ENCODE measurements at regions of chr3 and their contacts with region 1.

Region 1: GRCh38 chr3:184371570-184372018 is 6.4 kb downstream of the THPO start:
- DNase-seq: peak; percentile 81
- ATAC-seq: peak; percentile 95
- H3K4me3 Mint-ChIP-seq: no peak overlapping the region
- H3K27ac Mint-ChIP-seq: no peak overlapping the region
- H3K4me1 Mint-ChIP-seq: peaks cover 16% of the 10 kb centered on the region
- H3K27me3 Mint-ChIP-seq: peaks cover 3% of the 10 kb centered on the region

Region 2: DNA sequence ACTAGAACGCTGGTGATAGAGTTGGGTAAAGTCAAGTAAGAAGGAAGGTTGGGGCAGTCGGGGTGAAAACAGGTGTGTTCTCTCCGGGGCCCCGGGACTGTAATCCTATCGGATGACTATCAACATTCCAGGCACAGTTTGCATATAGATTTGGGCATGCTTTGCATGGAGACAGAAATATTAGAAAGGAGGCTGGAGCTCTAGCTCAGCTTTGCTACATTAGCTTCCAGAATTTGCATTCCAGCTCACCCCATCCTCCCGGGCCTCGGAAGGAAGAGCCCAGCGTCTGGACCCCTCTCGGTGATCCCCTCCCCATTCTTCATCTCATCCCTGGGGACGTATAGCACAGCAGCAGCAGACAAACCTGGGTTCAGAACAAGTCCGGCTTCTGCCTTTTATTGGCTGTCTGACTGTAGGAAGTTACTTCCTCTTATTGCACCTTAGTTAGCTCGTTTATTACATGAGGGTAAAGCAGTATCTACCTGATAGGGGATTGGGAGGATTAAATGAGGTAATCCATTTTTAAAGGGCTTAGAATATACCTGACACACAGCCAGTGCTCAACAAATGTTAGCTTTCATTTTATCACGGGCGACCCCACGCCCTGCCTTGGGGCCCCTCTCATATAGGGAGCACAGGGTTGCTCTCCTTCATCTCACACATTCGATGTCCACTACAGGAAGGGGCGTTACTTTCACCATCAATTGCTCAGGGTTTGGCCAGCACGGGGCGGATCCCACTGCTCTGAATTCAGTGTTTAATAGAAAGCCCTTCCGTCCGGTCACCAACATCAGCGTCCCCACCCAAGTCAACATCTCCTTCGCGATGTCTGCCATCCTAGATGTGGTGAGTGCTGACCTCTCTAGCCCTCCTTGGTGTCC is 271.5 kb before region 1 on chr3:
- CTCF ChIA-PET with region 1: no interaction called
- POLR2A ChIA-PET with region 1: no interaction called
- intact Hi-C with region 1: no loop called
- DNase-seq: no peak
- ATAC-seq: no peak
- H3K4me3 Mint-ChIP-seq: no peak overlapping the region
- H3K27ac Mint-ChIP-seq: no peak overlapping the region
- H3K4me1 Mint-ChIP-seq: no peaks in the 10 kb centered on the region
- H3K27me3 Mint-ChIP-seq: peaks cover 2% of the 10 kb centered on the region

Region 3: GRCh38 chr3:184417619-184418327 is 46.2 kb after region 1 on chr3:
- CTCF ChIA-PET with region 1: interaction called, 11 read pairs
- POLR2A ChIA-PET with region 1: no interaction called
- intact Hi-C with region 1: loop called in 1 of 2 experiments (anchors 1 kb)
- DNase-seq: peak; percentile 86
- ATAC-seq: peak; percentile 97
- H3K4me3 Mint-ChIP-seq: no peak overlapping the region
- H3K27ac Mint-ChIP-seq: no peak overlapping the region
- H3K4me1 Mint-ChIP-seq: peaks cover 2% of the 10 kb centered on the region
- H3K27me3 Mint-ChIP-seq: no peaks in the 10 kb centered on the region

Region 4: DNA sequence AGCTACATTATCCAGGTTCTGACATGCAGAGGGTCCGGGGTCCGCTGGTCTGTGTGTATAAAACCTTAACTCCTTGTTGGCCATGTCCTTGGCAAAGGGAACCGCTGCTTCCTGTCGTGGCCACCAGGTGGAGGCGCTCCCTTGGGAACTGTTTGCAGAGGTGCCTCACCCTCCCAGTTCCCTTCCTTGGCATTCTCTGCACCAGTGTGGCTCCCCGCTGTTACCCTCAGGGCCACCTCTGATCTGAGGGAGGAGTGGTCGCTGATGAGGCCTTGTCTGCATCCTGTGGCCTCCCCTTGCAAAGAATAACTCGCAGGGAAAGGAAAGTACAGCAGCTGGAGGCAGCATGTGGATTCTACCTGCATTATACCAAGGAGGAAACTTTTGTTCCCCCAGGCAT is 97.8 kb after region 1 on chr3:
- CTCF ChIA-PET with region 1: interaction called, 13 read pairs
- POLR2A ChIA-PET with region 1: interaction called, 3 read pairs
- intact Hi-C with region 1: loop called in 1 of 2 experiments (anchors 5 kb)
- DNase-seq: peak; percentile 73
- ATAC-seq: no peak
- H3K4me3 Mint-ChIP-seq: no peak overlapping the region
- H3K27ac Mint-ChIP-seq: no peak overlapping the region
- H3K4me1 Mint-ChIP-seq: peaks cover 16% of the 10 kb centered on the region
- H3K27me3 Mint-ChIP-seq: peaks cover 10% of the 10 kb centered on the region

Region 5: DNA sequence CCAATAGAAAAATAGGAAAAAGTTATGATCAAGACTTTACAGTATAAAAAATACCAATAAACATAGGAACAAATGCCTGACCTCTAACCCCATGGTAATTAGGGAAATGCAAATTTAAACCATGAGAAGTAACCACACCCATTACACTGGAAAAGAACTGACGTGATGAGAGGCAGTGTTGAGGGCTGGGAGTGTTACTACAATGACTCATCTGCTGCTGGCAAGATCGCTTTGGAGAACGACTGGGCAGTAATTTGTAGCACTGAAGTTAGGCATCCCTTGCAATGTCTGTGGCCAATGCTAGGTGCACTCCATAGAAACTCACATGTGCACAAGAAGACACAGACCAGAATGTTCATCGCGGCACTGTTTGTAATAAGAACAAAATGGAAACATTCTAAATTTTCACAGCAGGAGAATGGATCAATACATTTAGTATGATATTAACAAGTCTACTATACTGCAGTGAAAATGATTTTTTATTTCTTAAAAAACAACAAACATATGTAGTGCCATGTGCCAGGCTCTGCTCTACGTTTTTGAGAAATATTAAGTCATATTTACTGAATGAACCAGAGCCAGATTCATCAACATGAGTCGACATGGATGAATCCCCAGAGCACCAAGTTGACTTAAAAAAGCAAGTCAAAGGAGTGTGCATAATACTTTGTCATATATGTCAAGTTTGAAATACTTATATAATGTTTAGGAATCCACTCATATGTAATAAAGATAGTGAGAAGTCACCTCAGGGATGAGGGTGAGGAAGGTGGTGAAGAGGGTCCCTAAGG is 152.4 kb after region 1 on chr3:
- CTCF ChIA-PET with region 1: interaction called, 11 read pairs
- POLR2A ChIA-PET with region 1: no interaction called
- intact Hi-C with region 1: no loop called
- DNase-seq: peak; percentile 60
- ATAC-seq: peak; percentile 90
- H3K4me3 Mint-ChIP-seq: no peak overlapping the region
- H3K27ac Mint-ChIP-seq: peak overlapping the region; percentile 60
- H3K4me1 Mint-ChIP-seq: peaks cover 24% of the 10 kb centered on the region
- H3K27me3 Mint-ChIP-seq: peaks cover 16% of the 10 kb centered on the region